ENCODE measurements at regions of chr9 and their contacts with region 1.

Region 1: GRCh38 chr9:120842690-120843499 is at the start of gene PSMD5:
- DNase-seq: peak; percentile 99
- ATAC-seq: peak; percentile 99
- H3K4me3 ChIP-seq: peak within 1 kb of the TSS; percentile 88 to 99
- H3K27ac ChIP-seq: peak within 1 kb of the TSS; percentile 65
- H3K4me1 ChIP-seq: peaks cover 9 to 20% of the 10 kb centered on the region in 2 experiments
- H3K27me3 ChIP-seq: no peaks in the 10 kb centered on the region
- CTCF ChIP-seq: no peak
- POLR2A ChIP-seq: peak; percentile 96
- RAD21 ChIP-seq: no peak
- total RNA-seq, gene PSMD5: 64.3 TPM

Region 2: DNA sequence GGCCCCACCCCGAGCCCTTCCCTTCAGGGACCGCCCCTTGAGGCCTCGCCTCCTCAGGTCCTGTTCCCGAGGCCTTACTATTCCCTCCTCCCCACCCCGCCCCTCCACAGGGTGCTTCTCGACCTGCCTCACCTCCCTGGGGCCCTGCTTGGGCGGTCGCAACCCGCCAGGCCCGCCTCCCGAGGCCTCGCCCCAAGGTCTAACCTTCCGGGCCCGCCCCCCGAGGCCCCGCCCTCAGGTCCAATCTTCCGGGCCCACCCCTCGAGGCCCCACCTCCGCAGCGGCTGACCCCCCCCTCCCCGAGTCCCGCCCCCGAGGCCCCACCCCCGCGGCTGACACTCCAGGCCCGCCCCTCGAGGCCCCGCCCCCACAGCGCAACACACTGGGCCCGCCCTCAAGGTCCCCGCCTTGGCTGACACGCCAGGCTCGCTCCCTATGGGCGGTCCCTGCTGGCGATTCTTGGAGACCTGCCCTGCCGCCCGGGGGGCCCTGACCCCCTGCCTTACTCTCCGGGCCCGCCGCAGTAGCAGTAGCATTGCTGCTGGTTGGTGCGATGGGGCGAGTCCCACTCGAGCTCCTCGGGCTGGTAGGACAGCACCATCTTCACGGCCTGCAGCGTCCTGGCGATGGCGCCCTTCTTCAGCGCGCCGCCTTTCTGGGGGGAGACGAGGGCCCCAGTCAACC is 25.9 kb after region 1 on chr9:
- CTCF ChIA-PET with region 1: no interaction called
- POLR2A ChIA-PET with region 1: interaction called, 3 read pairs
- RAD21 ChIA-PET with region 1: no interaction called
- intact Hi-C with region 1: loop called (anchors 2 kb)
- DNase-seq: peak; percentile 94
- ATAC-seq: peak; percentile 95
- H3K4me3 ChIP-seq: peak overlapping the region; percentile 18 to 48; a peak in 3 of 4 replicates
- H3K27ac ChIP-seq: peak overlapping the region; percentile 55
- H3K4me1 ChIP-seq: peaks cover 22 to 33% of the 10 kb centered on the region in 2 experiments
- H3K27me3 ChIP-seq: no peaks in the 10 kb centered on the region
- CTCF ChIP-seq: peak in 2 of 3 experiments; percentile 5 to 49; a peak in 3 of 6 replicates
- POLR2A ChIP-seq: no peak
- RAD21 ChIP-seq: no peak